ENCODE measurements at regions of chr7 and their contacts with region 1.

Region 1: GRCh38 chr7:142063551-142064442 is 47.7 kb upstream of the MGAM2 start:
- DNase-seq: no peak
- ATAC-seq: no peak
- H3K4me3 ChIP-seq: no peak overlapping the region
- H3K27ac ChIP-seq: no peak overlapping the region
- H3K4me1 ChIP-seq: no peaks in the 10 kb centered on the region
- H3K27me3 ChIP-seq: no peaks in the 10 kb centered on the region
- CTCF ChIP-seq: no peak
- POLR2A ChIP-seq: no peak

Region 2: GRCh38 chr7:141630621-141631020 is 433.2 kb before region 1 on chr7:
- intact Hi-C with region 1: no loop called
- DNase-seq: no peak
- ATAC-seq: no peak
- H3K4me3 ChIP-seq: no peak overlapping the region
- H3K27ac ChIP-seq: no peak overlapping the region
- H3K4me1 ChIP-seq: peaks cover 0 to 9% (median 0%) of the 10 kb centered on the region in 12 donors
- H3K27me3 ChIP-seq: no peaks in the 10 kb centered on the region
- CTCF ChIP-seq: no peak
- POLR2A ChIP-seq: no peak

Region 3: GRCh38 chr7:142001163-142001874 is 62.5 kb before region 1 on chr7:
- intact Hi-C with region 1: no loop called
- DNase-seq: no peak
- ATAC-seq: no peak
- H3K4me3 ChIP-seq: no peak overlapping the region
- H3K27ac ChIP-seq: no peak overlapping the region
- H3K4me1 ChIP-seq: no peaks in the 10 kb centered on the region
- H3K27me3 ChIP-seq: no peaks in the 10 kb centered on the region
- CTCF ChIP-seq: no peak
- POLR2A ChIP-seq: no peak

Region 4: DNA sequence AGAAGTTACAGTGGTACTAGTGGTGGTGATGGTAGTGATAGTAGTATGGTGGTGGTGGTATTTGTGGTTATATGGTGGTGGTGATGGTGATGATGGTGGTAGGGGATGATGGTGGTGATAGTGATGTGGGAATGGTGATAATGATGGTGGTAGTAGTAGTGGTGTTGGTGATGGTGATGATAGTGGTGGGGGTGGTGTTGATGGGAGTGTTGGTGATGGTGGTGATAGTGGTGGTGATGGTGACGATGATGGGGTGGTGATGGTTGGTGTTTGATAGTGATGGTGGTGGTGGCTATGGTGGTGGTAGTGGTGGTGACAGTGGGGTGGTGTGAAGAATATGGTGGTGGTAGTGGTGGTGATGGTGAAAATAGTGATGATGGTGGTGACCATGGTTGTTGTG is 19.8 kb after region 1 on chr7:
- intact Hi-C with region 1: loop called in 1 of 10 experiments (anchors 2 kb)
- DNase-seq: no peak
- ATAC-seq: no peak
- H3K4me3 ChIP-seq: no peak overlapping the region
- H3K27ac ChIP-seq: no peak overlapping the region
- H3K4me1 ChIP-seq: no peaks in the 10 kb centered on the region
- H3K27me3 ChIP-seq: no peaks in the 10 kb centered on the region
- CTCF ChIP-seq: no peak
- POLR2A ChIP-seq: no peak

Region 5: GRCh38 chr7:142097386-142097970 is 33.7 kb after region 1 on chr7:
- intact Hi-C with region 1: loop called in 1 of 10 experiments (anchors 2 kb)
- DNase-seq: no peak
- ATAC-seq: no peak
- H3K4me3 ChIP-seq: no peak overlapping the region
- H3K27ac ChIP-seq: no peak overlapping the region
- H3K4me1 ChIP-seq: no peaks in the 10 kb centered on the region
- H3K27me3 ChIP-seq: no peaks in the 10 kb centered on the region
- CTCF ChIP-seq: no peak
- POLR2A ChIP-seq: no peak

Region 6: DNA sequence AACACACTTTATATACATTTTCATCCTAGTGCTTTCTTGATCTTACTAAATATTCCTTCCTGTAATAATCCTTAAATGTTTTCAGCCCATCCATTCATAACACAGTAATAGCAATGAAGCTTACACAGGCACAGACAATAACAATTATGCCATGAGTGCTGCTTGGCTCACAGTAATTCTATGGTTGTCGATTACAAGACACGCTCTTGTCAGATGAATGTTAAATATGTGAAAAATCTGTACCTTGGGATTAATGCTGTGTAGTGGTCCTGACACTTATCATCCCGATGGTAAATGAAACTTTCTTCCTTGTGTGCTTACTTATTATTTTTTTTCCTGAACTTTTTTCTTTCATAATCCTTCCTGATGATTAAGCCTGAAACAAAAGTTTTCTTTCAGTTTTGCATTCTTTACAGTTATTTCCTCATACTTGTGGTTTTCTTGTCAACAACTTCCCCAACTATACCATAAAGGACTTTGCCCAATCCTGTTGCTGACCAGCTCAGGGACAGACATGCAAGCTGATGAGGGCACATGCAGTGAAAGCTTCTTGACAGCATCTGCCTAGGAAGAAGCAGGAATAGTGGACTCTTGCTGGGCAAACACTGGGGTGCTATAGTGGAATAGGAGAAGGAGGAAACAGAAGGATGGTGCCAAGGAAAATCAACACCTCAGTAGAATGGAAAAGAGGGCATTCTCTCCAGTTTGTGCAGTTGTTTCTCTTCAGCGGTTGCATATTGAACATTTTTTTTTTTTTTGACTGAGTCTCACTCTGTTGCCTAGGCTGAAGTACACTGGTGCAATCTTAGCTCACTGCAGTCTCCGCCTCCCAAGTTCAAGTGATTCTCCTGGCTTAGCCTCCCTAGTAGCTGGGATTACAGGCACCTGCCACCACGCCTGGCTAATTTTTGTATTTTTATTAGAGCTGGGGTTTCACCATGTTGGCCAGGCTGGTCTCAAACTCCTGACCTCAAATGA is 41.0 kb after region 1 on chr7:
- intact Hi-C with region 1: loop called in 1 of 10 experiments (anchors 5 kb)
- DNase-seq: peak in 1 of 5 donors; percentile 26
- ATAC-seq: peak in 3 of 4 donors; percentile 51 to 59 (median 54)
- H3K4me3 ChIP-seq: peak overlapping the region in 1 of 12 donors; percentile 31
- H3K27ac ChIP-seq: peak overlapping the region in 1 of 12 donors; percentile 66
- H3K4me1 ChIP-seq: peaks cover 0 to 7% (median 0%) of the 10 kb centered on the region in 12 donors
- H3K27me3 ChIP-seq: no peaks in the 10 kb centered on the region
- CTCF ChIP-seq: no peak
- POLR2A ChIP-seq: no peak

Measured in heart left ventricle (tissue), 16 donors.